PC-3 (cell line): ENCODE measurements at regions of chr14 and their contacts with region 1.

Region 1: GRCh38 chr14:64510825-64511671 is 6.5 kb downstream of the ZBTB1 start:
- DNase-seq: peak; percentile 88
- ATAC-seq: peak; percentile 37
- H3K4me3 ChIP-seq: no peak overlapping the region
- H3K27ac ChIP-seq: 0 out of 2 replicates have a peak overlapping the region, but pooled peaks have one; percentile 12
- H3K4me1 ChIP-seq: peaks cover 54% of the 10 kb centered on the region
- H3K27me3 ChIP-seq: no peaks in the 10 kb centered on the region
- CTCF ChIP-seq: peak; percentile 98

Region 2: DNA sequence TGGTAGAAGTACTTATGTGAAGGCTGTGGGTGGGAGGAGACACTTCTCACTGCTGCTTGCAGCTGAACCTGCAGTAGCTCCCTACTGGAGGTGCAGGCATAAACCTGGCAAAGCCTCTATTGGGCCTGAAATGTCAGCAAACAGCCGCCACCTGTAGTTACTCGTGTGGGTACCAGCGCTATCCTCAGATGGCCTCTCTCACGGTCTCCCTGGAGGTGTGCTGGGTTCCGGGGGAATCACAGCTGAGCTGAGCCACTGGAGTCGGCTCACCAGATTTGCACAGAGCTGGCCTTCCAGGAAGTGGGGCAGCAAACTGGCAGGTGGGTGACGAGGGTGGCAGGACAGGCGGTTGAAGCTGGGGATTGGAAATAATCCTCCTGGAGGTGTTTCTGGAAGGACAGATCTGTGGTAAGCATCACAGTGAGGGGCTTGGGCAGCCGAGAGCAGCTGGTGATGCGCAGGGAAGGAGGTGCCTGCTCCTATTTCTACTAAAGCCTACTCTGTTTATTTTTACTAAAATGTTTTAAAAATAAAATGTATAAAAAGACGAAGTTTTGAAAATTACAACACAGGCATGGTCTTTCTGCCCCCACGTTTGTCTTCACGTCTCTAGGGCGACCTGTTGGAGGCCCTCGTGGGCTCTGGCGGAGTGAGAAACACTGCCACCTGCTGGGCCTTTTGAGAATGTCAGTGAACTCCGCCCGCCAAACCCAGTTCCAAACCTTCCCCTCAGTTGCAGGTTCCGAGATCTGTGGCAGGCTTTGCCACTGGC is 125.3 kb after region 1 on chr14:
- CTCF ChIA-PET with region 1: interaction called, 3 read pairs
- POLR2A ChIA-PET with region 1: no interaction called
- intact Hi-C with region 1: loop called (anchors 2 kb)
- DNase-seq: peak; percentile 87
- ATAC-seq: peak; percentile 93
- H3K4me3 ChIP-seq: no peak overlapping the region
- H3K27ac ChIP-seq: no peak overlapping the region
- H3K4me1 ChIP-seq: peaks cover 11% of the 10 kb centered on the region; the same call in 1 of the 2 replicates
- H3K27me3 ChIP-seq: no peaks in the 10 kb centered on the region
- CTCF ChIP-seq: peak; percentile 93